ENCODE measurements at regions of chr12 and their contacts with region 1.

Region 1: DNA sequence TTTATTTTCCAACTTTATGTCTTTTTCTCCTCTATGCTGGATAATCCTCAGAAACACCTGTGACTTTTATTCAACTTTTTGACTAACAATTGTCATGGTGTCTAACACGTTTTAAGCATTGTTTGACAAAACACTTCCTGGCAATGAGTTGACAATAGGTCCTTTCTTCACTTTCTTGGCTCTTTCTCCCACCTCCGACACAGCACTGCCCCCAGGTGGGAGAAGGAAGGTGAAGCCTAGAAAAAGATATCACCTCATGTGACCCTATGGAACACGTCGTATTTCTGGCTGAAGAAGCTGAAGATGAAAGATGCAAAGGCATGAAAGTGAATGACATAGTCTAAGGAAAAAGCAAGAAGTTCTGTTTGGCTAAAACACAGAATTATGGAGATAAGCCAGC is 430.0 kb downstream of the ETNK1 start:
- DNase-seq: peak; percentile 69
- H3K4me3 Mint-ChIP-seq: no peak overlapping the region
- H3K27ac Mint-ChIP-seq: no peak overlapping the region
- H3K4me1 Mint-ChIP-seq: no peaks in the 10 kb centered on the region
- H3K27me3 Mint-ChIP-seq: no peaks in the 10 kb centered on the region
- CTCF ChIP-seq: peak; percentile 48

Region 2: DNA sequence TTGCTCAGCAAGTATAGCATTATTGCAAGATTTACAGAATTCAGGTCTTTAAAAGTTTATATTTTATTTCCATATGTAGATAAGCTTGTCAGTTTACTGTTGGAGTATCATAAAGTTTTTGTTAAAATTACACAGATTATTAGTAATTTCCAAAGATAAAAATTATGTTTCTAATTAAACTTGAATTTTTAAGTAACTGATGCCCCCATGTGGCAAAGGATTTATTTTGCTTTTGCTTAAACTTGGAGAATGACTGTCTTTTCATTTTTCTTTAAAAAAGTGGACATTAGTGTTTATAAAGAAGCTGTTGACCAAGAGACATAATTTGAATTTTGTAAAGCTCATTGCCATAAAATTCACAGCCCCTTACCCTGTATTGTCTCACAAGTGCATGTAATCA is 384.2 kb before region 1 on chr12:
- CTCF ChIA-PET with region 1: no interaction called
- POLR2A ChIA-PET with region 1: no interaction called
- intact Hi-C with region 1: no loop called
- DNase-seq: no peak
- H3K4me3 Mint-ChIP-seq: no peak overlapping the region
- H3K27ac Mint-ChIP-seq: no peak overlapping the region
- H3K4me1 Mint-ChIP-seq: peaks cover 8% of the 10 kb centered on the region
- H3K27me3 Mint-ChIP-seq: no peaks in the 10 kb centered on the region
- CTCF ChIP-seq: peak; percentile 34

Region 3: GRCh38 chr12:22684140-22685118 is 370.6 kb before region 1 on chr12:
- CTCF ChIA-PET with region 1: interaction called, 8 read pairs
- POLR2A ChIA-PET with region 1: no interaction called
- intact Hi-C with region 1: loop called (anchors 2 kb)
- DNase-seq: peak; percentile 42
- H3K4me3 Mint-ChIP-seq: no peak overlapping the region
- H3K27ac Mint-ChIP-seq: no peak overlapping the region
- H3K4me1 Mint-ChIP-seq: no peaks in the 10 kb centered on the region
- H3K27me3 Mint-ChIP-seq: no peaks in the 10 kb centered on the region
- CTCF ChIP-seq: peak; percentile 53

Region 4: DNA sequence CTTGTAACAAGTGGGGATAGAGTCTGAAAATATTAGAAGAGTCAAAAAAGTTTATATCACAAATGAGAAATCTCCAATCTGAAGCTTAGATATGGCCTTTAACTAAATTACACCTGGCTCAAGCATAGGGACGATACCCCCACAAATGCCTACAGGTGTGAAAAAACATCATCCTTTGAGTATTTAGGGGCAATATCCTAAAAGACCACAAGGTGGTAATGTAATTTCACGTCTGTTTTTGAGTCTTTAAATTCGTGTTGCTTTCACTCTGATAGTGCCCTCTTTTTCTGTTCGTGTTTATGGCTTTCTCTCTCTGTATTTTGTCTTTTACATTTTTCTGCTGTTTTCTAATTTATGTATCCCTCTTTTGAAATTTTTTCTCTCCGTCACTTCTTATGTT is 345.7 kb before region 1 on chr12:
- CTCF ChIA-PET with region 1: interaction called, 4 read pairs
- POLR2A ChIA-PET with region 1: no interaction called
- intact Hi-C with region 1: loop called (anchors 1 kb)
- DNase-seq: peak; percentile 38
- H3K4me3 Mint-ChIP-seq: no peak overlapping the region
- H3K27ac Mint-ChIP-seq: no peak overlapping the region
- H3K4me1 Mint-ChIP-seq: no peaks in the 10 kb centered on the region
- H3K27me3 Mint-ChIP-seq: peaks cover 22% of the 10 kb centered on the region
- CTCF ChIP-seq: peak; percentile 38

Region 5: GRCh38 chr12:23066105-23066504 is 11.1 kb after region 1 on chr12:
- CTCF ChIA-PET with region 1: interaction called, 14 read pairs
- POLR2A ChIA-PET with region 1: interaction called, 3 read pairs
- intact Hi-C with region 1: no loop called
- DNase-seq: peak; percentile 38
- H3K4me3 Mint-ChIP-seq: no peak overlapping the region
- H3K27ac Mint-ChIP-seq: no peak overlapping the region
- H3K4me1 Mint-ChIP-seq: peaks cover 6% of the 10 kb centered on the region
- H3K27me3 Mint-ChIP-seq: no peaks in the 10 kb centered on the region
- CTCF ChIP-seq: no peak

Region 6: DNA sequence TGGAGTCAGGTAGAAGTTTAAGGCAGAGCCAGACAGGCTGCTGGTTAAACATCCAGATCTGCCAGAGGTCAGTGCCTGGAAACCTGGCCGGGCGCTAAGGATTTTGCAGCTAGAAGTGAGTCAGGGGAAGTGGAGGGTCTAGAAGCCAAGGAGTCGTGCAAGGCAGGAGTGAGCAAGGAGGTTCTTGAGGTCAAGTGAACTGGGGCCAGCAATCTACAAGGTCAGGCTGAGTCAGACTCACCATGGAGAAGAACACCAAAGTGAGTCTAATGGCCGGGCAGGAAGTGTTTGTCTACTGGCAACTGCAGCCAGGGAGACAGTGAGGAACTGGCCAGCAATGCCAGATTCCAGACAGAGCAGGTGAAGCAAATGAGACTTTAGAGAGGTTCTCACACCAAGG is 198.2 kb after region 1 on chr12:
- CTCF ChIA-PET with region 1: no interaction called
- POLR2A ChIA-PET with region 1: no interaction called
- intact Hi-C with region 1: no loop called
- DNase-seq: no peak
- H3K4me3 Mint-ChIP-seq: no peak overlapping the region
- H3K27ac Mint-ChIP-seq: no peak overlapping the region
- H3K4me1 Mint-ChIP-seq: no peaks in the 10 kb centered on the region
- H3K27me3 Mint-ChIP-seq: no peaks in the 10 kb centered on the region
- CTCF ChIP-seq: no peak

Measured in MCF 10A (cell line).